ENCODE measurements at regions of chr2 and their contacts with region 1.

Region 1: DNA sequence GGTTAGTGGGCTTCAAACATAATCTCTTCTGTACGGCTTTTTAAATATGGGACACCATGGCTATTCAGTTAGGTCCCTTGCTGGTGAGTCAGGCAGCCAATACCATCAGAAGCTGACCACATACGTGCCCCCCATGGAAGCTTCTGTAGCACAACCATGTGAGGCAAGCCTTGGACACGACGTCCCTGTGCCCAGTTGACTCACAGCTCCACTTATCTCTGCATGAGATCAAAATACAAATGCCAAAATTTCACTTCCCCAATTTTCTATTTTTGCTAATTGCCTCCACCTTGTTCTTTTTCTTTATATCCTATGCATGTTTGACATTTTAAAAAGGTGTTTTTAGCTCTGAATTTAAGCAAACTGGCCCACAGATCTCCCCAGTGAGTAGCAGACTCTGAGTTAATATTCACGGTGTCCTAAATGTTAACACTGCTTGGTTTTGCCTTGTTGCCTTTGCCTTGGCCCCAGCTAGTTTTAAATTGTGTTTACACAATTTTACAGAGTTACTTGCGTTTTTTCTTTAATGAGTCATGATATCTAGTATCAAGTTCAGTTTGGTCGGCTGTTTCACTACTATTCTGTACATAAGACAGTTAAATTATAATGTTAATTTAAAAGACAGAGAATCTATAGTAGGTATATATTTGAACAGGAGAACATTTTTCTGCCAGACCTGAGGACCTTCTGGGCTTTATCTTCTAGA is 77.5 kb downstream of the CDCA7 start:
- DNase-seq: no peak
- H3K4me3 Mint-ChIP-seq: no peak overlapping the region
- H3K27ac Mint-ChIP-seq: no peak overlapping the region
- H3K4me1 Mint-ChIP-seq: peaks cover 18% of the 10 kb centered on the region
- H3K27me3 Mint-ChIP-seq: peaks cover 21% of the 10 kb centered on the region

Region 2: DNA sequence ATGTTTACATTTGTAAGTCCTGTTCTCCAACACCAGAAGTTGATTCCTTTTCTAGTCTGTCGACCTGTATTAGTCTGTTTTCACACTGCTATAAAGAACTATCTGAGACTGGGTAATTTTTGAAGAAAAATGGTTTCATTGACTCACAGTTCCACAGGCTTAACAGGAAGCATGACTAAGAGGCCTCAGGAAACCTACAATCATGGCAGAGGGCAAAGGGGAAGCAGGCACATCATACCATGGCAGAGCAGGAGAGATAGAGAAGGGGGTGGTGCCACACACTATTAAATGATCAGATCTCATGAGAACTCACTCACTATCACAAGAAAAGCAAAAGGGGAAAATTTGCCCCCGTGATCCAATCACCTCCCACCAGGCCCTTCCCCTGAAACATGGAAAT is 469.4 kb before region 1 on chr2:
- CTCF ChIA-PET with region 1: no interaction called
- intact Hi-C with region 1: loop called (anchors 1 kb)
- DNase-seq: peak; percentile 44
- H3K4me3 Mint-ChIP-seq: no peak overlapping the region
- H3K27ac Mint-ChIP-seq: peak overlapping the region; percentile 66
- H3K4me1 Mint-ChIP-seq: peaks cover 18% of the 10 kb centered on the region
- H3K27me3 Mint-ChIP-seq: no peaks in the 10 kb centered on the region